ENCODE measurements at regions of chr11 and their contacts with region 1.

Region 1: DNA sequence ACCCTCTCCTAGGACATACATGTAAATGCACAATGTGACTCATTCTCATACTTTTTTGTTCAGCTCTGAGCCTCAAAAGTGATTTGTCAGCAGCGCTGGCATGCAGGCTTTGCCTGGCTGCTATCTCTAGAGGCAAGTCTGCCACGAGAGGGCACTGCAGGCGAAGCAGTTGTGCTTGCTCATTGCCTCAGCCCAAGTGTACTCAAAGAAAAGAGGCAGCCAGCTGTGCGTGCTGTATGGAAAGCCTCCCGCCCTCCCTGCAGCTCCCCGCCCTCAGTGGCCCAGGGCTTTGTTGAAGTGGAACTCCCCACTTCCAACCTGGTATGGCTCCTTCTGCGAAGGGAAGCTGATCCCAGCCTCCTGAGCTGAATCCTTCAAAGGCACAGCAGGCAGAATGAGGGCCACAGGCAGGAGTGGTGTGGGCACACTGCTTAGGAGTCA is 16.3 kb downstream of the SDHAF2 start:
- DNase-seq: peak; percentile 95
- ATAC-seq: peak; percentile 87
- H3K4me3 Mint-ChIP-seq: no peak overlapping the region
- H3K27ac Mint-ChIP-seq: peak overlapping the region; percentile 44
- H3K4me1 Mint-ChIP-seq: peaks cover 35% of the 10 kb centered on the region
- H3K27me3 Mint-ChIP-seq: no peaks in the 10 kb centered on the region

Region 2: GRCh38 chr11:60615497-60615896 is 830.7 kb before region 1 on chr11:
- CTCF ChIA-PET with region 1: no interaction called
- POLR2A ChIA-PET with region 1: no interaction called
- intact Hi-C with region 1: no loop called
- DNase-seq: no peak
- ATAC-seq: no peak
- H3K4me3 Mint-ChIP-seq: no peak overlapping the region
- H3K27ac Mint-ChIP-seq: no peak overlapping the region
- H3K4me1 Mint-ChIP-seq: no peaks in the 10 kb centered on the region
- H3K27me3 Mint-ChIP-seq: peaks cover 8% of the 10 kb centered on the region

Region 3: DNA sequence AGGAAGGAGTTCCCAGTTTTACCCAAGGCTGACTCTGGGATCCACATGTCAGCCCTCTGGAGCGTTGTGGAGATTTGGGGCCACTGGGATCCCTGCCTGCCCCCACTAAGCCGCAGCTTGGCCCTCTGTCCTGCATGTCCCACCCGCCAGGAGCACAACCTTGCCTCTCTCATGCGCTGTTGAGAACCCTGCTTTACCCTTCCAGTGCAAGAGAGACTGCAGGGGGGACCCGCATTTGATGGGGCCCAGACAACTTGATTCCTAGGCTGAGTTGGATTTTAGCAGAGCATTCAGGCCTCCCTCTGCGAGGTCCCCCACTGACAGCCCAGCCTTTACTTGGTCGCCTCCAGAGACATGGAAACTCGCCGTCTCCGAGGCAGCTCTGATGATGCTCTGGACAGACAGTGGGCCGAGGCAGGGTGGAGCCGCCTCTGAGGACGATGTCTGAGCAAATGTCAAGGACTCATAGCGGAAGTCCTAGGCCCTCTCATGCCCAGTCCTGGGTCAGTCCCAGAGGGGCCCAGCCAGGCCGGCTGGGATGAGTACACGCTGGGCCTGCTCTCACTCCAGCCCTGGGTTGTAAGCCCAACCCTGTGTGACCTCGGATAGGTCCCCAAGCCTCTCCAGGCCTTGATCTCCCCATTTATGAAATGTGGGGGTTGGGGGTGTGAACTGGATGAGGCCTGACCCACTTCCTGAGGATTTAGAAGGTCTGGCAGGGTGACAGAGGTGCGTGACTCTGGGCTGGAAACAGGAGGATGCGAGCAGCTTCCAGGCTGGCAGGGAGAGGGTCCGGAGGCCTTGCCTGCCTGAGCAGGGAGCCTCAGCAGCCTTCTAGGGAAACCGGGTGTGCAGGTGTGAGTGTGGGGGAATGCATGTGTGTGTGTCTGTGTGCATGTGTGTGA is 343.3 kb before region 1 on chr11:
- CTCF ChIA-PET with region 1: no interaction called
- POLR2A ChIA-PET with region 1: no interaction called
- intact Hi-C with region 1: no loop called
- DNase-seq: peak; percentile 49
- ATAC-seq: peak; percentile 16
- H3K4me3 Mint-ChIP-seq: no peak overlapping the region
- H3K27ac Mint-ChIP-seq: no peak overlapping the region
- H3K4me1 Mint-ChIP-seq: peaks cover 25% of the 10 kb centered on the region
- H3K27me3 Mint-ChIP-seq: no peaks in the 10 kb centered on the region

Region 4: GRCh38 chr11:61477727-61478148 is 31.5 kb after region 1 on chr11:
- CTCF ChIA-PET with region 1: interaction called, 33 read pairs
- POLR2A ChIA-PET with region 1: no interaction called
- intact Hi-C with region 1: no loop called
- DNase-seq: peak; percentile 70
- ATAC-seq: peak; percentile 56
- H3K4me3 Mint-ChIP-seq: no peak overlapping the region
- H3K27ac Mint-ChIP-seq: no peak overlapping the region
- H3K4me1 Mint-ChIP-seq: peaks cover 9% of the 10 kb centered on the region
- H3K27me3 Mint-ChIP-seq: no peaks in the 10 kb centered on the region

Region 5: GRCh38 chr11:61509043-61510029 is 63.1 kb after region 1 on chr11:
- CTCF ChIA-PET with region 1: interaction called, 84 read pairs
- POLR2A ChIA-PET with region 1: no interaction called
- intact Hi-C with region 1: loop called in 1 of 2 experiments (anchors 2 kb)
- DNase-seq: peak; percentile 88
- ATAC-seq: peak; percentile 94
- H3K4me3 Mint-ChIP-seq: no peak overlapping the region
- H3K27ac Mint-ChIP-seq: no peak overlapping the region
- H3K4me1 Mint-ChIP-seq: peaks cover 6% of the 10 kb centered on the region
- H3K27me3 Mint-ChIP-seq: peaks cover 41% of the 10 kb centered on the region

Region 6: GRCh38 chr11:61581030-61581928 is 135.0 kb after region 1 on chr11 and contains the start of gene SYT7:
- CTCF ChIA-PET with region 1: no interaction called
- POLR2A ChIA-PET with region 1: no interaction called
- intact Hi-C with region 1: loop called in 1 of 2 experiments (anchors 2 kb)
- DNase-seq: peak; percentile 97
- ATAC-seq: peak; percentile 91
- H3K4me3 Mint-ChIP-seq: peak within 1 kb of the TSS; percentile 64
- H3K27ac Mint-ChIP-seq: no peak within 1 kb of the TSS
- H3K4me1 Mint-ChIP-seq: peaks cover 12% of the 10 kb centered on the region
- H3K27me3 Mint-ChIP-seq: peaks cover 35% of the 10 kb centered on the region
- total RNA-seq, gene SYT7: 0.04 TPM in 1 of 2 experiments, not detected in the other